ENCODE measurements at regions of chr10 and their contacts with region 1.

Region 1: GRCh38 chr10:110210674-110211464 is 3.5 kb downstream of the MXI1 start:
- DNase-seq: peak; percentile 96
- ATAC-seq: peak; percentile 71
- H3K4me3 Mint-ChIP-seq: peak overlapping the region; percentile 86
- H3K27ac Mint-ChIP-seq: peak overlapping the region; percentile 96
- H3K4me1 Mint-ChIP-seq: peaks cover 53% of the 10 kb centered on the region
- H3K27me3 Mint-ChIP-seq: no peaks in the 10 kb centered on the region

Region 2: DNA sequence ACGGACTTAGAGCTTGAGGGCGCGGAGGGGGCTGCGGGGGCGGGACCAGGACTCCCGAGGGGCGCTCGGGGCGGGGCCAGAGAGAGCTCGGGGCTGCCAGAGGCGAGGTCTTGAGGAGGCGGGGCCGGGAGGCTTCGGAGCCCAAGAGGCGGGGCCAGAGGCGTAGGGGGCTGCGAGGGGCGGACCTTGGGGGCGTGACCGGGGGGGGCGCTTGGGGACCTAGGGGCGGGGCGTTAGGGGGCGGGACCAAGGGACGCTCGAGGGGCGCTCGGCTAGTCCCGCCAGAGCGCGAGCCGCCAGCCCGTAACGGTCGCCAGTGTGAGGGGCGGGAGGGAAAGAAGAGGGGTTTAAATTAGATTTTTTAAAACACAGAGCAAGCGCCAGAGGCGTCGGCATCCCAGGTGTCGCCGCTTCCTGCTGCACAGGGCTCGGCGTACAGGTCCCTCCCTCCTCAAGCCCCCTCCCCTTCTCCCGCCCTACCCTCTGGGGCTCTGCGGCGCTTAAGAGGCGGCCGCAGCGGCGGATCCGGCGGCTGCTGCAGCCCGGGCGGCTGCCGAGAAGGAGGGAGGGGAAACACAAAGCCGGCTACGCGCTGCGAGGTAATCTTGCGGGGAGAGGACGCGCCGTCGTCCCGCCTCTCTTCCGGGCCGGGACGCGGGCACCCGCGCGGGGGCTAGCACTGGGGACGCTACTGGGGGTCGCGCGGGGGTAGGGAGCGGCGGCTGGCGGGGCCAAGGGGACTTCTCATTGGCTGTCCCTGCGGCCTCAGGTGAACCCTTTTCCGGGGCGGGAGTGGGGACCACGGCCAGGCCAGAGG is 203.0 kb before region 1 on chr10 and contains the start of gene ADD3:
- CTCF ChIA-PET with region 1: no interaction called
- POLR2A ChIA-PET with region 1: no interaction called
- intact Hi-C with region 1: loop called (anchors 1 to 5 kb)
- DNase-seq: peak; percentile 94
- ATAC-seq: peak; percentile 65
- H3K4me3 Mint-ChIP-seq: no peak within 1 kb of the TSS
- H3K27ac Mint-ChIP-seq: peak within 1 kb of the TSS; percentile 94
- H3K4me1 Mint-ChIP-seq: peaks cover 49% of the 10 kb centered on the region
- H3K27me3 Mint-ChIP-seq: no peaks in the 10 kb centered on the region
- total RNA-seq, gene ADD3: 72.5 to 101 TPM

Region 3: GRCh38 chr10:110158051-110159005 is 52.5 kb before region 1 on chr10:
- CTCF ChIA-PET with region 1: no interaction called
- POLR2A ChIA-PET with region 1: interaction called, 3 read pairs
- intact Hi-C with region 1: loop called in 1 of 2 experiments (anchors 5 kb)
- DNase-seq: no peak
- ATAC-seq: no peak
- H3K4me3 Mint-ChIP-seq: no peak overlapping the region
- H3K27ac Mint-ChIP-seq: no peak overlapping the region
- H3K4me1 Mint-ChIP-seq: peaks cover 17% of the 10 kb centered on the region
- H3K27me3 Mint-ChIP-seq: peaks cover 69% of the 10 kb centered on the region

Region 4: GRCh38 chr10:110252151-110252550 is 41.3 kb after region 1 on chr10:
- CTCF ChIA-PET with region 1: no interaction called
- POLR2A ChIA-PET with region 1: no interaction called
- intact Hi-C with region 1: loop called in 1 of 2 experiments (anchors 1 kb)
- DNase-seq: no peak
- ATAC-seq: no peak
- H3K4me3 Mint-ChIP-seq: no peak overlapping the region
- H3K27ac Mint-ChIP-seq: no peak overlapping the region
- H3K4me1 Mint-ChIP-seq: peaks cover 39% of the 10 kb centered on the region
- H3K27me3 Mint-ChIP-seq: peaks cover 10% of the 10 kb centered on the region

Region 5: DNA sequence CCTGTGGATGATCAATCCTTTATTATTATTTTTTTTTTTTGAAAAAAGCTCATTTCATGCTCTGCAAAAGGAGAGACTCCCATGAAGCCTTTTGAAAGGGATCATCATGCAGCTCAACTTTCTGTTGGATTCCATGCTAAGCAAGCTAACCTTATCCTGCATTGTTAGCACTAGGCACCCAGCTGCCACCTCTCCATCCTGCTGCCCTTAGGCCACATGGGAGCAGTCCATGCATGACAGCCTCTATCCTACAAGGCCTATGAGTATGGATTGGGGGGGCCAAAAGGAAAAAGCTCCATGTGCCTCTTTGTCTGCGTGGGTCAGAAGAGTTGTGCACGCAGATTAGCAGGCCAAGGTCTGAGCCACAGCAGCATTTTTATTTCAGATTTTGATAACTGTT is 74.6 kb after region 1 on chr10:
- CTCF ChIA-PET with region 1: interaction called, 48 read pairs
- POLR2A ChIA-PET with region 1: no interaction called
- intact Hi-C with region 1: no loop called
- DNase-seq: no peak
- ATAC-seq: no peak
- H3K4me3 Mint-ChIP-seq: no peak overlapping the region
- H3K27ac Mint-ChIP-seq: no peak overlapping the region
- H3K4me1 Mint-ChIP-seq: peaks cover 1% of the 10 kb centered on the region
- H3K27me3 Mint-ChIP-seq: no peaks in the 10 kb centered on the region

Region 6: GRCh38 chr10:110336111-110336721 is 125.3 kb after region 1 on chr10:
- CTCF ChIA-PET with region 1: no interaction called
- POLR2A ChIA-PET with region 1: no interaction called
- intact Hi-C with region 1: no loop called
- DNase-seq: no peak
- ATAC-seq: no peak
- H3K4me3 Mint-ChIP-seq: no peak overlapping the region
- H3K27ac Mint-ChIP-seq: no peak overlapping the region
- H3K4me1 Mint-ChIP-seq: peaks cover 9% of the 10 kb centered on the region
- H3K27me3 Mint-ChIP-seq: peaks cover 1% of the 10 kb centered on the region

Region 7: DNA sequence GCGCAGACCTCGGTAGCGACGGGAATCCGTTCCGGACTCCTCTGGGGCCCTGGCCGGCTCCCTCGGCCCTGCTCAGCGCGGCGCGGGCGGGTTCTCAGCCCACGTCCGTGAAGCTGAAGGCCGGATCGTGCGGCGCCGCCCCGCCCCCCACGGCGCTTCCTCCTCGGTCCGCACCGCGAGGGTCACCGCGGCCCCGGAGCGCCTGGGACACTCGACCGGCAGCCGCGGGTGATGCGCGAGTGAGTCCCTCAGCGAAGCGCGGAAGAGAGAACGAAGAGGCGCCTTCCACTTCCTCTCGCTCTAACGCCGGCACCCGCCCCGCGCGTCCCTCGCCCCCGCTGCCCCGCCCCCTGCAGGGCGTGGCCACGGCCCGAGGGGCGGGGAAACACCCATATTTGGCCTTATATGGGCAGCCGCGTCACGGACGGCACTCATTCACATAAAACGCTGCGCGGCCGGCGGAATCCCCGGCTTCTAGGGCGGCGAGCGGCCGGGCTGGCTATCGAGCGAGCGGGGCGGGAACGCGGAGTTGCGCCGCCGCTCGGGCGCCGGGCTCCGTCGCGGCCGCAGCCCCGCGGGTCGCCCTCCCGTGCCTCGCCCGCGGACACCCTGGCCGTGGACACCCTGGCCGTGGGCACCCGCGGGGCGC is 286.7 kb after region 1 on chr10 and contains the start of gene DUSP5:
- CTCF ChIA-PET with region 1: interaction called, 5 read pairs
- POLR2A ChIA-PET with region 1: interaction called, 3 read pairs
- intact Hi-C with region 1: loop called in 1 of 2 experiments (anchors 2 kb)
- DNase-seq: peak; percentile 97
- ATAC-seq: peak; percentile 68
- H3K4me3 Mint-ChIP-seq: peak within 1 kb of the TSS; percentile 95
- H3K27ac Mint-ChIP-seq: peak within 1 kb of the TSS; percentile 92
- H3K4me1 Mint-ChIP-seq: peaks cover 46% of the 10 kb centered on the region
- H3K27me3 Mint-ChIP-seq: no peaks in the 10 kb centered on the region
- total RNA-seq, gene DUSP5: 60.9 to 70.7 TPM

Region 8: GRCh38 chr10:110918643-110919363 is 707.9 kb after region 1 on chr10 and contains the start of gene BBIP1:
- CTCF ChIA-PET with region 1: no interaction called
- POLR2A ChIA-PET with region 1: no interaction called
- intact Hi-C with region 1: loop called in 1 of 2 experiments (anchors 5 kb)
- DNase-seq: no peak
- ATAC-seq: peak; percentile 93
- H3K4me3 Mint-ChIP-seq: peak within 1 kb of the TSS; percentile 96
- H3K27ac Mint-ChIP-seq: peak within 1 kb of the TSS; percentile 98
- H3K4me1 Mint-ChIP-seq: peaks cover 41% of the 10 kb centered on the region
- H3K27me3 Mint-ChIP-seq: no peaks in the 10 kb centered on the region
- total RNA-seq, gene BBIP1: 34.3 to 48.8 TPM

Measured in activated CD4-positive, alpha-beta T cell treated with anti-CD3 and anti-CD28 coated beads for 36 hours (primary cell).